Activated CD8-positive, alpha-beta memory T cell treated with anti-CD3 and anti-CD28 coated beads, Interleukin-2, amount 10 ng/mL, durations not matched to agents 7 days and 5 days (primary cell): ENCODE measurements at regions of chr16 and their contacts with region 1.

Region 1: GRCh38 chr16:75110637-75111513 is 5.7 kb downstream of the LDHD start:
- DNase-seq: peak; percentile 89
- ATAC-seq: peak; percentile 85
- H3K4me3 Mint-ChIP-seq: peak overlapping the region; percentile 36
- H3K27ac Mint-ChIP-seq: peak overlapping the region; percentile 72
- H3K4me1 Mint-ChIP-seq: peaks cover 51% of the 10 kb centered on the region
- H3K27me3 Mint-ChIP-seq: no peaks in the 10 kb centered on the region

Region 2: DNA sequence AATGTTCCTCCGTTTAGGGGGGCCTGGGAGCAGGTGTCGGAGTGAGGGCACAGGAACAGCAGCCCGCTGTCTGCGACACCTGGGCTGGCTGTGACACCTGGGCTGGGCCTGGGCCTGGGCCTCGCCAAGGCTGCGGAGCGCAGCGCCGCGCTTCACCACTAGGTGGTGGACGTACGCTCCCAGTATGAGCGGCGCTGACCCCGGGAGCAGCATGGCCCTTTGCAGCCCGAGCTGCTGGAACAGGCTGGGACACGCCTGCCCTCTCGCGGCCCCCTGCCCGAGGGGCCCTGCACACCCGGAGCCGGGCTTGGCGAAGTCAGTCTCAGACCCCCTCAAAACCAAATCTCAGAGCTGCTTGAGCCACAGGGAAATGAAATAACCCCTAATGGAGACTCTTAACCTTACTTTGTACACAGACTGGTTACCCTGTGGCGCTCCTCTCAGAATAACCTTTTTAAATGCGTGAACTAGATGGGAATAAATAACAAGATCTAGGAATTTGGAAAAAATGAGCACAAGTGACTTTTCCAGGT is 297.7 kb before region 1 on chr16:
- CTCF ChIA-PET with region 1: interaction called, 33 read pairs
- DNase-seq: peak; percentile 75
- ATAC-seq: peak; percentile 100
- H3K4me3 Mint-ChIP-seq: no peak overlapping the region
- H3K27ac Mint-ChIP-seq: no peak overlapping the region
- H3K4me1 Mint-ChIP-seq: no peaks in the 10 kb centered on the region
- H3K27me3 Mint-ChIP-seq: peaks cover 4% of the 10 kb centered on the region

Region 3: DNA sequence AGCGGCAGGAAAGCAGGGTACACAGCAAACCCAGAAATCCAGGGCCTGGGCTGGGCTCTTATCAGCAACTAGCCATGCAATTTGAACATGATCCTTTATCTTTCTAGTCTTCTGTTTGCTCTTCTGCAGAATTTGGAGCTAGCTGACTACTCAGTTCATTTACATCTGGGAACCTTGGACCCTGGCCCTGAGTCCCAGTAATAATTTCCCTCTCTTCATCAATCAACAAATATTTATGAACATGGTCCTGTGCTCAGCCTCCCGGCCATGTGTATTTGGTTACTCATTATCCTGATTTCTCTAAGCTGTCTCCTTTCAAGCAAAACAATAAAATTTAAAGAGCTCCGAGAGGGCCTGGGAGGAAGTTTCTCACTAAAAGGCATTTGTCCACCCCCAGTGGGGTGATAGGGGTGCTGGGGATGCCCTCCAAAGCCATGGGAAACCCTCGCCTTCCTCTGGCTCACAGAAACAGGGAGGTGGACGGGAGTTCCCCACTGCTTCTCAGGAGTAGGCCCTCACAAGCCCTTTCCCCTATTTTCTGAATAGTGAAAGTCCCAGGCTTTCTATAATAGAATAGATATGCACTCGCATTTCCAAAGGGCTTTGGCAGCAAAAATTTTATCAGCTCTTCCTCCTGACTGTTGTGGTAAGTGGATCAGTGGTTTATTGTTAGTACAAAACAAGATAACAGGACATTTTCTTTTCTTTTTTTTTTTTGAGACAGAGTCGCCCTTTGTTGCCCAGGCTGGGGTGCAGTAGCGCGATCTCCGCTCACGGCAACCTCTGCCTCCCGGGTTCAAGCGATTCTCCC is 119.1 kb before region 1 on chr16:
- CTCF ChIA-PET with region 1: interaction called, 150 read pairs
- DNase-seq: no peak
- ATAC-seq: no peak
- H3K4me3 Mint-ChIP-seq: no peak overlapping the region
- H3K27ac Mint-ChIP-seq: no peak overlapping the region
- H3K4me1 Mint-ChIP-seq: no peaks in the 10 kb centered on the region
- H3K27me3 Mint-ChIP-seq: peaks cover 13% of the 10 kb centered on the region

Region 4: DNA sequence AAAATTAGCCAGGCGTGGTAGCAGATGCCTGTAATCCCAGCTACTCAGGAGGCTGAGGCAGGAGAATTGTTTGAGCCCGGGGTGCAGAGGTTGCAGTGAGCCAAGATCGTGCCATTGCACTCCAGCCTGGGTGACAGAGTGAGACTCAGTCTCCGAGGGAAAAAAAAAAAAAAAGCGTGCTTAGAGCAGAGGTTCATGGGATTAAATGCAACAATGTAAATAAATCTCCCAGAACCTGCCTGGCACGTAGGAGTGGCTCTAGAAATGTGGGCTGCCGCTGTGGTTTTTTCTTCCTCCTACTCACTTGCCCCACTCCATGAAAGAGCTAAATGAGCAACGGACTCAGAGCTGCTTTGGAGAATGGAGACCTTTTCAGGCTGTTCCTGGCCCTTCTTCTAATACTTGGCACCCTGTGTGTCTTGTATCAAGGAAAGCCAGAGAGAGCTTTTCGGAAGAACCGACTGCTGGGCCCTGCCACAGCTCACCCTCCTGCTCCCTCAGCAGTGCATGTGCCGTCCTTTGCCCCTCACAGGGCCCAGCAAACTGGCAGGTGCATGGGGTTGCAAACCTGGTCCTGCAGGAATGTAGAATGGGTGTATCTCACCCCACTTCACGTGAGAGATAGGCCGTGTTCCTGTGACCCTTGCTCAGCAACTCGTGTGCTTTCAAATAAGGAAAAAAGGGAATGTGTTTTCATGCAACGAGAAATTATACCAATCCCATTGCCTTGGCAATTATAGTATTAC is 46.3 kb before region 1 on chr16:
- CTCF ChIA-PET with region 1: interaction called, 42 read pairs
- DNase-seq: peak; percentile 60
- ATAC-seq: peak; percentile 52
- H3K4me3 Mint-ChIP-seq: peak overlapping the region; percentile 58
- H3K27ac Mint-ChIP-seq: peak overlapping the region; percentile 81
- H3K4me1 Mint-ChIP-seq: peaks cover 32% of the 10 kb centered on the region
- H3K27me3 Mint-ChIP-seq: no peaks in the 10 kb centered on the region

Region 5: DNA sequence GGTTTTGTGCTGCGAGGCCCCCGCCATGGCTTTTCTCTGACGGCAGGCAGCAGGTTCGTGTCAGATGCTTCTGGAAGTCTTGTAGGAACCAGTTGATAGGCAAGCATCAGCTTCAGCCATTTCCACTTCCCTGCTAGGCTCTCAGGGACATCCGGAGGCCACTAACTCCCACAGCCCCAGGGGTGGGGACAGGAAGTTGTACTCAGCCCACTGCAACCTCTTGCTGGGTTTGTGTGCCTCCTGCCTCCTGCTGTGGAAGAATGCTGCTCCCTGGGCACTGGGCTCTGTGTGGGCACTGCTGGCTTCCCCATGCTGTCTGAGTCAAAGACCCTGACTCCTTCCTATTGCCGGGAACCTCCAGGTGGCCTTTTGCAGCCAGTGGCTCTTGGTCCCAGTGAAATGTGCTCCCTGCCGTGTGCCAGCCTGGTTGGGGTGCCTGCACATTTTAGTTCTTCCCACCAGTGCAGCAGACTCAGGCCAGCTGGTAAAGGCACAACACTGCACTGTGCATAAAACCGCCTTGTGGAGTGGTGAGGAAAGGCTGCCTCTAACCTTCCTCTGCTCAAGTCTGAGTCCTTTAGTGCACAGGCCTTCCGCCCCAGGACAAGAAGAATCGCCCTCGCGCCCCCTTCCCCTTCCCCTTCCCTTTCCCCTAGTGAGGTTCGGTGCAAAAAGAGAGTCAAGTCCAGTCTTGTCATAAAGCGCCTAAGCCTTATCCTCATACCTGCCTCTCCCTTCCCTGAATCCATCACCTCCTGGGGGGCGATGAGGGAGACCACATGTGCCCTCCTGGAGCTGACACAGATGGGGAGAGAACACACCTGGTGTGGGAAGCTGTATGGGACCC is 10.9 kb before region 1 on chr16:
- CTCF ChIA-PET with region 1: interaction called, 59 read pairs
- DNase-seq: peak; percentile 84
- ATAC-seq: peak; percentile 73
- H3K4me3 Mint-ChIP-seq: peak overlapping the region; percentile 19
- H3K27ac Mint-ChIP-seq: peak overlapping the region; percentile 93
- H3K4me1 Mint-ChIP-seq: peaks cover 56% of the 10 kb centered on the region
- H3K27me3 Mint-ChIP-seq: no peaks in the 10 kb centered on the region